ENCODE measurements at regions of chr10 and their contacts with region 1.

Region 1: DNA sequence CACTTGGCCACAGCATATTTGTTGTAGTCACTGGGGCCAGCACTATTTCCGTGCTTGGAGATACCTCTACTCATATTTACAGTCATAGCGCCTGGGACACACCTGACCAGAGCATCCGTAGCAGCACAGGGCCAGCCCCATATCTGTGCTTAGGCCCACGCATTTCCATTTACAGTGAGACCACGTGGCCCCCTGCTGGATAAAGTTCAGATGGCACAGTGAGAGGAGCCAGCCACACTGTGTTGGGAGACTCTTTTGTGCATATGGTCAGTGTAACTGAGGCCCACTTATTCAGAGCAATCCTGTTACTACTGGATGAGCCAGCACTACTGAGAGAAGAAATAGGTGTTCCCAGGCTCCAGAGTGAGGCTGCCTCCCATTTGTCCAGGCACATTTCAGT is 455.3 kb downstream of the REEP3 start:
- DNase-seq: peak; percentile 25
- ATAC-seq: peak; percentile 67 to 82

Region 2: GRCh38 chr10:63751836-63752235 is 224.7 kb before region 1 on chr10:
- intact Hi-C with region 1: no loop called
- DNase-seq: no peak
- ATAC-seq: no peak

Region 3: GRCh38 chr10:63866075-63866746 is 110.3 kb before region 1 on chr10:
- intact Hi-C with region 1: loop called (anchors 5 to 10 kb)
- DNase-seq: peak; percentile 33
- ATAC-seq: peak; percentile 81 to 89

Region 4: GRCh38 chr10:63878428-63878827 is 98.1 kb before region 1 on chr10:
- intact Hi-C with region 1: loop called in 1 of 2 experiments (anchors 10 kb)
- DNase-seq: no peak
- ATAC-seq: no peak

Region 5: DNA sequence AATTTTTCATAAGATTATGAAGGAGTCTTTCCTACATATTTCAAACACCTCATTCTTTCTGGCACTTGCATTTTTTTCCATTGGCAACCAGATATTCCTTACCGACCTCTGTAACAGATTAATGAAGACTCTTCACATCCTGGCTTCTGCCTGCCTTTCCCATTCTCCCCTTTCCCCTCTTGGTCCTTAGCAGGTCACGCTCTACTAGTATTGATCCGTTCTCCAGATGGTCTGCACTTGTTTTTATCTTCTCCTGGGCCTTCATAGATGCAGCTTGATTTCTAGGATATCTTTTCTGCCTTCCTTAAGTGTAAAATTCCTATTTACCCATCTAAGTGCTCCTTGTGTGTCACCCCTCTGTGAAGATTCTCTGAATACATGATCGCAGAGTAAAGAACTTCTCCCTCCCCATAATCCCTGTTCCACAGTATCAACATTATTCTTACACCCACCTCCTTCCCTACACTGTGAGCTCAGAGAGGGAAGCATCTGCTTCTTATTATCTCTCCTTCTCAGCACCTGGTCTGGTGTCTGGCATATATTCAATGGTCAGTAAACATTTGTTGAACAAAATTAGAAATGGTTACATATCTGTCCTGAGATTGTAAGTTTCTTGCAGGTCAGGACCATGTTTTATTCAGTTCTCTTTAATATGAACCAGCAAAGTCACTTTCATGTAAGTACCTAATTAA is 198.9 kb after region 1 on chr10:
- intact Hi-C with region 1: no loop called
- DNase-seq: no peak
- ATAC-seq: no peak

Measured in left cardiac atrium (tissue), 4 donors.